ENCODE measurements at regions of chr13 and their contacts with region 1.

Region 1: GRCh38 chr13:68290751-68291150 is 1060.6 kb upstream of the PCDH9 start:
- DNase-seq: no peak
- ATAC-seq: no peak
- H3K4me3 ChIP-seq: no peak overlapping the region
- H3K4me3 Mint-ChIP-seq: no peak overlapping the region
- H3K27ac ChIP-seq: no peak overlapping the region
- H3K27ac Mint-ChIP-seq: no peak overlapping the region
- H3K4me1 ChIP-seq: no peaks in the 10 kb centered on the region
- H3K4me1 Mint-ChIP-seq: no peaks in the 10 kb centered on the region
- H3K27me3 ChIP-seq: no peaks in the 10 kb centered on the region
- H3K27me3 Mint-ChIP-seq: no peaks in the 10 kb centered on the region
- CTCF ChIP-seq: no peak

Region 2: GRCh38 chr13:68319384-68319783 is 28.6 kb after region 1 on chr13:
- CTCF ChIA-PET with region 1: no interaction called
- POLR2A ChIA-PET with region 1: no interaction called
- intact Hi-C with region 1: no loop called
- DNase-seq: no peak
- ATAC-seq: no peak
- H3K4me3 ChIP-seq: no peak overlapping the region
- H3K4me3 Mint-ChIP-seq: no peak overlapping the region
- H3K27ac ChIP-seq: no peak overlapping the region
- H3K27ac Mint-ChIP-seq: no peak overlapping the region
- H3K4me1 ChIP-seq: no peaks in the 10 kb centered on the region
- H3K4me1 Mint-ChIP-seq: no peaks in the 10 kb centered on the region
- H3K27me3 ChIP-seq: no peaks in the 10 kb centered on the region
- H3K27me3 Mint-ChIP-seq: no peaks in the 10 kb centered on the region
- CTCF ChIP-seq: no peak

Region 3: DNA sequence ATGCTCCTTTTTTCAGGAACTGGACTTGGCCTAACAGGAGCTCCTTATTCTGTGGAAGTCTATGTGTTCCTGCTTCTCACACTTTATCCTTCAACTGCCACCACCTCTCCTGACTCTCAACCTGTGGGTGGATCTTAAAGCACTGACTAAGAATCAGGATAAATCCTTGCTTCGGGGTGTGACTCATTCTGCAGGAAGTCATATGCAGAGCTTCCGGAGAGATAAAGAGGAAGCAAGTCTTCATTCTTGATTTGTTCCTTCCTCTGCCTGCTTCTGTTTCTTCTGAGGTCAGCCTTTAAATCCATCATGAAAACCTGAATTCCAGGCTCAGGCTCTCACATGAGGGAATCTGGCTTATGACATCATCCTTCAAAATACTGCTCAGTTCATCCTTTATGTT is 1679.8 kb after region 1 on chr13:
- CTCF ChIA-PET with region 1: no interaction called
- POLR2A ChIA-PET with region 1: no interaction called
- intact Hi-C with region 1: loop called in 1 of 2 experiments (anchors 10 kb)
- DNase-seq: no peak
- ATAC-seq: no peak
- H3K4me3 ChIP-seq: no peak overlapping the region
- H3K4me3 Mint-ChIP-seq: no peak overlapping the region
- H3K27ac ChIP-seq: no peak overlapping the region
- H3K27ac Mint-ChIP-seq: no peak overlapping the region
- H3K4me1 ChIP-seq: no peaks in the 10 kb centered on the region
- H3K4me1 Mint-ChIP-seq: no peaks in the 10 kb centered on the region
- H3K27me3 ChIP-seq: no peaks in the 10 kb centered on the region
- H3K27me3 Mint-ChIP-seq: no peaks in the 10 kb centered on the region
- CTCF ChIP-seq: no peak